Endothelial cell of umbilical vein (primary cell): ENCODE measurements at regions of chr11 and their contacts with region 1.

Region 1: DNA sequence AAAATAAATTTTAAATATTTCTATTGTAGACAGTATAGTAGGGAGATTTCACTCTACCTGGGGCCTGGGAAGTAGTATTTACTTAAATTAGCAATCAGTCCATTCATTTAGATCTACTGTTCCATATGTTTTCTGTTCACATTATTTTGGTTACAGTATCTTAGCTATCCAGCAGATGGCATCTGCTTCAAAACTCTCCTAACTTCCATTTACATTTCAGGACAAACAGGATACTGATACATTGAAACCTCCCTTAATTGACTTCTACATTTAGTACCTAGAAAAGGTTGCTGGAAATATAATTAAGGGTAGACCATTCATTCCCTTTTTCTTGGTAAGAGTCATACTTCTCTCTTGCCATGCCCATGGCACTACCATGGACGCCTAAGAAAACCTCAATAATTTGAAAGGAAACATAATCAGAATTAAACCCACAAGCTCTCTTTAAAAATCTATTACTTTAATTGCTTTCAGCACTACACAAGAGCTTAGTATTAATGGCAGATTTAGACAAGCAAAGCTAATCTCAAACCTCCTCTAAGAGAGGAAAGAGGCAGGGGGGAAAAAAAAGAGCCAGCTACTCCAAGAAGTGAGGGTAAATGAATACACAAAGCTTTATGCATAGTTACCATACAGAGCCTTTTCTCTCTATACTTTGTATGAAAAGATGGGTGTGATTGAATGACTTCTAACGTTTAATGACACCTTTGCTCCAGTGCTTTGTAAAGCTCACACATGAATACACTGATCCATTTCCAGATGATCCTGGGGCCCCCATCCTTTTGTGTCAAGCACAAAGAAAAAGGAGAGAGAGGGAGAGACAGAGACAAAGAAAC is 131.2 kb upstream of the MTMR2 start:
- DNase-seq: peak; percentile 71
- H3K4me3 ChIP-seq: no peak overlapping the region
- H3K27ac ChIP-seq: no peak overlapping the region
- H3K4me1 ChIP-seq: peaks cover 14% of the 10 kb centered on the region
- H3K27me3 ChIP-seq: no peaks in the 10 kb centered on the region
- CTCF ChIP-seq: peak; percentile 37 to 39
- POLR2A ChIP-seq: no peak

Region 2: DNA sequence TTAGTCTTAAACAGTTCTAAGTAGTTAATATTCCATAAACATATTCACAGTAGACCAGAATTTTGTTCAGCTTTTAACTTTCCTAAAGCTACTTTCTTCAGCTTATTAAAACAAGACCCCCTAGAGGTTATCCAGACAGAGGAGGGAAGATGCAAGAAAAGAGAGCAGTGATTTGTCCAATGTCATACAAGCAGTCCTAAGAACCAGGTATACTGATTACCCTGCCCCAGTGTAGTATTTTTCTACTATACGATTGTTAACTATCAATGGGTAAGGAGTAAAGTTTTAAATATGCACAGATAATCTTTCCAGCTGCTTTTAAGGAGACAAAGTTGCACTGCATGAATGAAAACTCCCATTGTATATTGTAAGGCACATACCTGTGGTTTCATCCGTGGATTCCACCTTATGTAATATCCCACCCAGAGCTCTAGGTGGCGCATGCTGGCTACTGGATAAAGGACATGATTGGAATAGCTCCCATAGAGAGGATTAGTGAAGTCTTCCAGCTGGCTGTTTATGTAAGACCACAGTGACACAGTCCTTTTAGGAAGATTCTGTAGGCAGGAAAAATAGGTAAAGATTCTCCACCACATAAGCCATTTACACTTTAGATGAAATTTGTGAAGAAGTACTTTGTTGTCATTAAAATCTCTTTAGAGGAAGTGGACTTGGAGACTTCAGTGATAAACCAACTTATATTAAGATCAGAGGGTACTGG is 219.2 kb before region 1 on chr11:
- CTCF ChIA-PET with region 1: interaction called, 21 read pairs
- POLR2A ChIA-PET with region 1: no interaction called
- dilution Hi-C with region 1: no loop called
- intact Hi-C with region 1: loop called (anchors 1 kb)
- DNase-seq: peak; percentile 77
- H3K4me3 ChIP-seq: no peak overlapping the region
- H3K27ac ChIP-seq: no peak overlapping the region
- H3K4me1 ChIP-seq: no peaks in the 10 kb centered on the region
- H3K27me3 ChIP-seq: no peaks in the 10 kb centered on the region
- CTCF ChIP-seq: peak; percentile 71 to 88
- POLR2A ChIP-seq: no peak

Region 3: DNA sequence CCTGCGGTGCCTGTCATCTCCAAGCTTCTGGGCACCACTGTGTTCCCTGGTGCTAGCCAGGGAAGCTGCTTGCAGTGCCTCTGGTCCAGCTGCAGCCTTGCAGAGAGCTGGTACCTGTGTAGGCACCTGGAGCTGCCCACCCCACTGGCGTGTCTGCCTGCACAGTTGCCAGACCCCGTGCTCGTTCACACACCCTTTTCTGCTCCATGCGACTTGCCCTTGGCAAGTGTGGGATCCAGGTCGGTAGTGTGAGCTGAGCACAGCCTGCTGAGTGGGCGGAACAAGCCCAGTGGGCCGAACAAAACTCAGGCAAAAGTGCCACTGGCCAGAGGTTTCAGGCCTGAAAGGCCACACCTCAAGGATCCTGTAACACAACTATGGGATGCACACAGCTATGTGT is 15.4 kb after region 1 on chr11:
- CTCF ChIA-PET with region 1: interaction called, 19 read pairs
- POLR2A ChIA-PET with region 1: interaction called, 6 read pairs
- dilution Hi-C with region 1: no loop called
- intact Hi-C with region 1: no loop called
- DNase-seq: no peak
- H3K4me3 ChIP-seq: no peak overlapping the region
- H3K27ac ChIP-seq: no peak overlapping the region
- H3K4me1 ChIP-seq: no peaks in the 10 kb centered on the region
- H3K27me3 ChIP-seq: no peaks in the 10 kb centered on the region
- CTCF ChIP-seq: no peak
- POLR2A ChIP-seq: no peak

Region 4: GRCh38 chr11:96155627-96156378 is 100.7 kb after region 1 on chr11:
- CTCF ChIA-PET with region 1: interaction called, 5 read pairs
- POLR2A ChIA-PET with region 1: no interaction called
- dilution Hi-C with region 1: no loop called
- intact Hi-C with region 1: loop called (anchors 1 kb)
- DNase-seq: peak; percentile 92
- H3K4me3 ChIP-seq: no peak overlapping the region
- H3K27ac ChIP-seq: peak overlapping the region; percentile 93
- H3K4me1 ChIP-seq: peaks cover 38% of the 10 kb centered on the region
- H3K27me3 ChIP-seq: no peaks in the 10 kb centered on the region
- CTCF ChIP-seq: peak; percentile 29 to 30
- POLR2A ChIP-seq: no peak

Region 5: DNA sequence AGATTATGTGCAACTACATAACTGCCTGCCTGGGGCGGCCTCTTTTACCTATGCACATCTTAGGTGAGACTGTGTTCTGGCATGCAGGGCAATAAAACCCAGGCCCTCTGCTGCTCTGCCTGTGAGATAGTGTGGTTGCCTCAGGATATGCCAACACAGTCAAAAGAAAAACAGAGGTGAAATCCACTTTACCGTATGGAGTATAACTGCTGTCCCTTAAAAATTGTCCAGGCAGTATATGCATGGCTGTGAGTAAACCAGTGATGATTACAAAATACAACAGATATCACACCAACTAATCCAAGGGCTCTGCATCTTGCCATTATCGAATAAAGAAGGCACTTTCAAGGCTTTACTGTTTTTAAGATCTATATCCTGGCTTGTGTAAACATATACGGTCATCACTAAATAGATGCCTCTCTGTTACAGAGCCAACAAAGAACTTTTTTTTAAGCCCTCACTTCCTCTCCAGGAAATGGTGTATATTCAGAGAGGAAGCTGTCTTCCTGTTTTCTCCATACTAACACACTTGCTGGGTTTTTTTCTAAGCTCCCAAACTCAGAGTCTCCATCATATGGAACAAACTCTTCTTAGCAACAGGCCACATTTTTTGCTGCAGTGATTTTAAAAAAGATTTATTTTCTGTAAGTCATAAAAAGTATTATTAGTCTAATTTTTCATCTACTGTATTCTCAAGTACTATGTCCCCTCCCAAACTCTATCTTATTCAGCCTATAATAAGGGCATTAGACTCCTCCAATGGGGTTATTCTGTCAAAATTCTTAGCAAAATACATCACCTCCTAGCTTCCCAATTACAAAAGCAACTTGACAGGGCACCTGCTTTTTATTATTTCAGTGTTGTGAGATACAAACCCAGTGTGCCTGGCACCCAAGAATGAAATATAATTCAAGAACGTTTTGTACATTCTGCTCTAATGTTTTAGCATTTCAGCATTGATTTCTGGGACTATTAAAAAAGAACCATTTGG is 152.7 kb after region 1 on chr11:
- CTCF ChIA-PET with region 1: interaction called, 9 read pairs
- POLR2A ChIA-PET with region 1: no interaction called
- dilution Hi-C with region 1: no loop called
- intact Hi-C with region 1: loop called (anchors 1 kb)
- DNase-seq: peak; percentile 89
- H3K4me3 ChIP-seq: peak overlapping the region in 1 of 3 experiments; percentile 42
- H3K27ac ChIP-seq: peak overlapping the region; percentile 94
- H3K4me1 ChIP-seq: peaks cover 48% of the 10 kb centered on the region
- H3K27me3 ChIP-seq: no peaks in the 10 kb centered on the region
- CTCF ChIP-seq: no peak
- POLR2A ChIP-seq: peak; percentile 72

Region 6: GRCh38 chr11:96235751-96236150 is 180.7 kb after region 1 on chr11:
- CTCF ChIA-PET with region 1: interaction called, 27 read pairs
- POLR2A ChIA-PET with region 1: no interaction called
- dilution Hi-C with region 1: no loop called
- intact Hi-C with region 1: no loop called
- DNase-seq: no peak
- H3K4me3 ChIP-seq: no peak overlapping the region
- H3K27ac ChIP-seq: no peak overlapping the region
- H3K4me1 ChIP-seq: peaks cover 10% of the 10 kb centered on the region
- H3K27me3 ChIP-seq: no peaks in the 10 kb centered on the region
- CTCF ChIP-seq: no peak
- POLR2A ChIP-seq: no peak